Panc1 (cell line): ENCODE measurements at regions of chr1 and their contacts with region 1.

Region 1: GRCh38 chr1:84665703-84666317 is 24.5 kb downstream of the SSX2IP start:
- DNase-seq: no peak
- ATAC-seq: no peak
- H3K4me3 ChIP-seq: no peak overlapping the region
- H3K27ac ChIP-seq: no peak overlapping the region
- H3K4me1 ChIP-seq: no peaks in the 10 kb centered on the region
- H3K27me3 ChIP-seq: no peaks in the 10 kb centered on the region
- CTCF ChIP-seq: no peak

Region 2: DNA sequence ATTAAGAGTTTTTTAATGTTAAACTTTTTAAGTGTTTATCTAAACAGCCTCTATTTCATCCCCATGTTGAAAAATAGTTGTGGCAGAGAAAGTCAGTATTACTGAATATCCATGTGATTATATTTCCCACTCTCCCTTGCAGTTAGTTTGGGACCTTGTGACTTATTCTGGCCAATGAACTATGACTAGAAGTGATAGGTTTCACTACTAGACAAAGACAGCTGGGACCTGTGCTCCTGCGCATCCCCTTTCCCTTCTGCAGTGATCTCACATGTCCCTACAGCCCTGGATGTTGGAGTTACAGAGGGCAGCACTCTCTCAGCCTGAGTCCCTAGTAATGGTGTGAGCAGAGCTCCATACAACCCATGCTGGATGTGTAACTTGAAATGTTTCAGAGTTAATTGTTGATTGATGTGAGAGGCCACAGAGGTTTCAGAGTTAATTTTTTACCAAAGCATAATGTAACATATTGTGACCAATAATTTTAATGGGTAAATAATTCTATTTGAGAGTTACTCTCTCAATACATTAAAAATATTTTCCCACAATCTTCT is 383.0 kb before region 1 on chr1:
- CTCF ChIA-PET with region 1: no interaction called
- POLR2A ChIA-PET with region 1: no interaction called
- in situ Hi-C with region 1: no loop called
- intact Hi-C with region 1: no loop called
- DNase-seq: no peak
- ATAC-seq: peak; percentile 56; the same call in 1 of the 2 replicates
- H3K4me3 ChIP-seq: no peak overlapping the region
- H3K27ac ChIP-seq: no peak overlapping the region
- H3K4me1 ChIP-seq: no peaks in the 10 kb centered on the region
- H3K27me3 ChIP-seq: no peaks in the 10 kb centered on the region
- CTCF ChIP-seq: peak; percentile 13; the same call in 1 of the 2 replicates

Region 3: DNA sequence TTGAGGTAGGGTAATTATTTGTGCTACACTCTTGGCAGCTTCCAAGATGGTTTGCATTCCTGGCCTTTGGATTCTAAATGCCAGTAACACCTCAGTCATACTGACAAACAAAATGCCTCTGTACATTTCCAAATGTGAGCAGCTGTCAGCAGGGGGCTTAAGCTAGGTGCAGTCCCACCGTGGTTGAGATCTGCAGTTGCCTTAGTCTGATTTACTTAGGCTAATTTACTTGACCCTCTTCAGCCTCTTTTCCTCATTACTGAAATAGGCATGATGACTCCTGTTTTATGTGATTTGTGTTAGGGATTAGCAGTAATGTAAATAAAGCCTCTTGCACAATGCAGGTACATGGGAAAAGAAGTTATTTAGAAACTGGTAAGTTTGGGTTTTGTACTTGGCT is 173.1 kb before region 1 on chr1:
- CTCF ChIA-PET with region 1: no interaction called
- POLR2A ChIA-PET with region 1: no interaction called
- in situ Hi-C with region 1: no loop called
- intact Hi-C with region 1: no loop called
- DNase-seq: no peak
- ATAC-seq: no peak
- H3K4me3 ChIP-seq: no peak overlapping the region
- H3K27ac ChIP-seq: no peak overlapping the region
- H3K4me1 ChIP-seq: no peaks in the 10 kb centered on the region
- H3K27me3 ChIP-seq: no peaks in the 10 kb centered on the region
- CTCF ChIP-seq: 0 out of 2 replicates have a peak, but pooled peaks have one; percentile 28

Region 4: GRCh38 chr1:84653130-84653677 is 12.6 kb before region 1 on chr1:
- CTCF ChIA-PET with region 1: no interaction called
- POLR2A ChIA-PET with region 1: interaction called, 23 read pairs
- in situ Hi-C with region 1: no loop called
- intact Hi-C with region 1: no loop called
- DNase-seq: no peak
- ATAC-seq: peak; percentile 76
- H3K4me3 ChIP-seq: no peak overlapping the region
- H3K27ac ChIP-seq: no peak overlapping the region
- H3K4me1 ChIP-seq: no peaks in the 10 kb centered on the region
- H3K27me3 ChIP-seq: no peaks in the 10 kb centered on the region
- CTCF ChIP-seq: peak; percentile 45